ENCODE measurements at regions of chr9 and their contacts with region 1.

Region 1: DNA sequence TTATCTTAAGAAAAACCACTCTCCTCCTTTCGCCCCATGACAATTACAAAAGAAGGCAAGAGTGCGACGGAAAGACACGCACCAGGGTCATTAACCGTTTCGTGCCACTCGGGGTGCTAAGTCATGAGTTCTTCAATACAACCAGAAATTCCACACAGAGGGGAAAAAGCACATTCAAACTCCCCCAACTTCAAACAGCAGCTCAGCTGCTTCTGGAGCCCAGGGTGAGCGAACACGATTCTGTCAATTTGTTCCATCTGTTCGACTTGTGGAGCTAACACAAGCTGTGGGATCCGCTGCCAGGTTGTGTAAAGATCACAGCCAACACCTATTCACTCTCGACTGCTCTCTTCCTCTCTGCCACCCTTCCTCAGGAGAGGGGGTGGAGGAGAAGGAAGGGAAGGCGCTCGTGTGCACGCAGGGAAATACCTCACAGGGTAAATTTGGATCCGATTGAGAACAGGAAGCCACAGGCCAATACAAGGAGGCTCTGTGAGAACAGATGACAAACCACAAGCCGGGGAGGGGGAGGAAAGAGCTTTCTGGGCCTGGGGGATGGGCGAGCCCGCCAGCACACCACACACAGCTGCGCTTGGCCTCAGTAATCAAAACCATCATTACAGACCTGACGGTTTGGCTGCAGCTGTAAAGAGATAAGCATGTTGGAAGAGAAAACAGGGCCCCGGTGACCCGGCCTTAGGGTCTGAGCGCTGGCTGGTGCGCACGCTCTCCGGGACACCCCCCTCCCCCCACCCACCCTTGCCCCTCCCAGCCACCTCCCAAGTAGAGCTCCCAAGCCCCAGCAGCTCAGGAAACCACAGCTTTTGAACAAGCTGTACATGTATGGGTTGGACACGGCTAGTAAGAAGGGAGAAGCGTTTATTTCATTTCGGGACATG is 54.3 kb downstream of the PTCH1 start:
- DNase-seq: peak; percentile 94
- ATAC-seq: peak; percentile 84
- H3K4me3 ChIP-seq: peak overlapping the region; percentile 5; the same call in 1 of the 2 replicates
- H3K27ac ChIP-seq: peak overlapping the region; percentile 89
- H3K4me1 ChIP-seq: peaks cover 44% of the 10 kb centered on the region
- H3K27me3 ChIP-seq: no peaks in the 10 kb centered on the region
- CTCF ChIP-seq: no peak
- POLR2A ChIP-seq: no peak
- RAD21 ChIP-seq: no peak; the same call in 1 of the 2 replicates

Region 2: GRCh38 chr9:95268681-95269080 is 193.8 kb before region 1 on chr9:
- CTCF ChIA-PET with region 1: no interaction called
- POLR2A ChIA-PET with region 1: no interaction called
- dilution Hi-C with region 1: no loop called
- in situ Hi-C with region 1: no loop called
- intact Hi-C with region 1: loop called (anchors 5 kb)
- DNase-seq: peak; percentile 41
- ATAC-seq: peak; percentile 69
- H3K4me3 ChIP-seq: no peak overlapping the region
- H3K27ac ChIP-seq: no peak overlapping the region
- H3K4me1 ChIP-seq: peaks cover 4% of the 10 kb centered on the region; the same call in 1 of the 2 replicates
- H3K27me3 ChIP-seq: no peaks in the 10 kb centered on the region
- CTCF ChIP-seq: peak; percentile 49
- POLR2A ChIP-seq: no peak
- RAD21 ChIP-seq: peak; percentile 50

Region 3: DNA sequence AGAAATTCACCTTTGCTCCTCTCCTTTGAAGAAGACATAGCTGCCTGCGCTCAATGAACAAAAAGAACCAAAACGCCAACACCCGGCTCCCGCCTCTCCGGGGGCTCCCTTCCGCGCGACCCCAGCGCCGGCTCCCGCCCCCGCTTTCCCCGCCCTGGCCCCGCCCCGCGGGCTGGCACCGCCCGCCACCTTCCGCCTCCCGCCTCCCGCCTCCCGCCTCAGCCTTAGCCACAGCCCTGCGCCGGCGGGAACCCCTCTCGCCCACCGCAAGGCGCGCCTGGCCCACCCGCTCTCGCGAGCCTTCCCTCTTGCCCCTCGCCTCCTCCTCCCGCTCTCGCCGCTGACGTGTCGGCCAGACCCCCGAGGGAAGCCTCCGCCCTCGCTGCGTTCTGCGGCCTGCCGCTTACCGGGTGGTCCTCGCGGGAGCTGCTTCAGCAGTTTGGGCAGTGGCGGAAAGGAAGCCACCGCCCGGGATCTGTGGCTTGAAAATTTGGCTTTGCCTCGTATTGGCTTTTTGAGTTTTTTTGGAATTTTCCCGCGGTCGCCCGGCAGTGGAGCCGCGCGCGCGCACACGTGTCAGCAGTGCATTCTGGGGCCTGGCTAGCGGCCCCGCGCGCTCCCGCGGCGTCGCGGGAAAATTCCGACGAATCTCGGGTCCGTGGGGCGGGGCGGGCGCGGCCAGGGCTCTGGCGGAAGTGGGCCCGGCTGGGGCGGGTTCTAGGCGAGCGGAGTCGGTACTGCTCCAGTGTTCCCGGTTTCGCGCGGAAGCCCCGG is 145.2 kb before region 1 on chr9 and contains the start of gene FANCC:
- CTCF ChIA-PET with region 1: no interaction called
- POLR2A ChIA-PET with region 1: no interaction called
- dilution Hi-C with region 1: no loop called
- in situ Hi-C with region 1: no loop called
- intact Hi-C with region 1: loop called (anchors 2 kb)
- DNase-seq: peak; percentile 86
- ATAC-seq: peak; percentile 92
- H3K4me3 ChIP-seq: peak within 1 kb of the TSS; percentile 99
- H3K27ac ChIP-seq: peak within 1 kb of the TSS; percentile 100
- H3K4me1 ChIP-seq: peaks cover 2% of the 10 kb centered on the region; the same call in 1 of the 2 replicates
- H3K27me3 ChIP-seq: no peaks in the 10 kb centered on the region
- CTCF ChIP-seq: no peak
- POLR2A ChIP-seq: peak; percentile 86
- RAD21 ChIP-seq: no peak
- total RNA-seq, gene FANCC: 6.3 and 6.4 TPM in 2 replicates

Region 4: DNA sequence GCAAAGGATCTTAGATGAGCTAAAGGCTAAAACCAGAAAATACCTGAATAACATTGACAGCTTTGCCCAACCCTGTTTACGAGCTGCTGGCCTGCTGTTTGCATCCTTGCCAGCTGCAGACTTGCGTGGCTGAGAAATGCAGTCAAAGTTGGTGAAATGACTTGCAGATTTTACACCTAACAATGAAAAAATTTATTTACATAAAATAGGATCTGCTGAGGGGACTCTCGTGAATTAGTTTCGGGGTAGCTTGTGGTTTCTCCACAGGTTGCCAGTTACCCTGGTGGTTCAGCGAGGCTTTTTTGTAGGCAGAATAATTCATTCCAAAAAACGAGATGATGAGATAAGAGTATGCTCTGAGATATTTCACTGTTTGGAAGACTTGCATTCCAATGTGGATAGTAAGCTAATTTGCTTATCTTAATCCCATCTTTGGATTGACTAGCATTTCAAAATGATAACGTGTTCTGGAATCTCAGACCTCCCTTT is 79.3 kb before region 1 on chr9:
- CTCF ChIA-PET with region 1: no interaction called
- POLR2A ChIA-PET with region 1: interaction called, 4 read pairs
- dilution Hi-C with region 1: no loop called
- in situ Hi-C with region 1: no loop called
- intact Hi-C with region 1: loop called (anchors 5 kb)
- DNase-seq: peak; percentile 85
- ATAC-seq: peak; percentile 77
- H3K4me3 ChIP-seq: no peak overlapping the region
- H3K27ac ChIP-seq: peak overlapping the region; percentile 74
- H3K4me1 ChIP-seq: peaks cover 17% of the 10 kb centered on the region
- H3K27me3 ChIP-seq: no peaks in the 10 kb centered on the region
- CTCF ChIP-seq: no peak
- POLR2A ChIP-seq: no peak
- RAD21 ChIP-seq: no peak

Region 5: DNA sequence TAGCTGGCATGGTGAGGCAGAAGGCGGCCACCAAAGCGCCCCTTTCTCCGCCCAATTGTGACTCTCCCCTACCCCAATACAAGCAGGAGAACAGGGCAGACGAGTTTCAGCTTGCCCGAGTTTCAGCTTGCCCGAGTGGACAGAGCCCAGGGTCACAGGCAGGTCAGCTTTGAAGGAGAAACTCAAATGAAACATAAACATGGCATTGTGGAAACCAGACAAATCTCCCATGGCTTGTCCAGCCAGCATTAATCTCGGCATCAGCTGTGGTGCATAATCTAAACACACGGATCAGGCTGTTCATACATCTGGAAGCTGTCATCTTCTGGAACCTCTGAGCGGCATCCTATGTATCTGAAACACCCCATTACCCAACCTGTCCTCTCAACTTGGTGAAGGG is 37.3 kb after region 1 on chr9:
- CTCF ChIA-PET with region 1: interaction called, 3 read pairs
- POLR2A ChIA-PET with region 1: interaction called, 12 read pairs
- dilution Hi-C with region 1: no loop called
- in situ Hi-C with region 1: no loop called
- intact Hi-C with region 1: no loop called
- DNase-seq: peak; percentile 57
- ATAC-seq: peak; percentile 38
- H3K4me3 ChIP-seq: no peak overlapping the region
- H3K27ac ChIP-seq: no peak overlapping the region
- H3K4me1 ChIP-seq: peaks cover 28% of the 10 kb centered on the region
- H3K27me3 ChIP-seq: no peaks in the 10 kb centered on the region
- CTCF ChIP-seq: no peak
- POLR2A ChIP-seq: no peak
- RAD21 ChIP-seq: no peak

Measured in IMR-90 (cell line).